Keratinocyte (primary cell): ENCODE measurements at regions of chr12 and their contacts with region 1.

Region 1: DNA sequence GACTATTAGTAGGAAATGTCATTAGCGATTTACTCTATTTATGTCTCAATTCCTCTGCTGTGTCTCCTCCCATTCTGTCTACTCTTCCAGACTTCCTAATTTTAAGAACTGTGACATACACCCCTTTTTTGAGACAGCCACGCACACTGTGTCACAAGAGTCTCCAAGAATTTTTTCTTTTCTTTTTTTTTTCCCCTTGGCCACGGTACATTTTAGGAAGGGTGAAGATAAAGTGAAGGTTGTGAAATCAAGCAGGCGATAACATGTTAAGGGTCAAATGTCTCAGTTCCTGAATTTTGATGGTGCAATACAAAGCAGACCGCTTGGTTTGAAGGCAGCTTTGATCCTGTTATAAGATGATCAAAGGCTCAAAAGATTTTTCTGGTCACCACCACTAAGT is 4.3 kb downstream of the OLR1 start:
- DNase-seq: no peak
- H3K4me3 ChIP-seq: no peak overlapping the region
- H3K27ac ChIP-seq: no peak overlapping the region
- H3K4me1 ChIP-seq: peaks cover 10% of the 10 kb centered on the region
- H3K27me3 ChIP-seq: no peaks in the 10 kb centered on the region
- CTCF ChIP-seq: no peak

Region 2: GRCh38 chr12:10220398-10221077 is 53.0 kb after region 1 on chr12:
- dilution Hi-C with region 1: loop called (anchors 10 kb)
- DNase-seq: no peak
- H3K4me3 ChIP-seq: no peak overlapping the region
- H3K27ac ChIP-seq: no peak overlapping the region
- H3K4me1 ChIP-seq: no peaks in the 10 kb centered on the region
- H3K27me3 ChIP-seq: no peaks in the 10 kb centered on the region
- CTCF ChIP-seq: no peak